ENCODE measurements at regions of chr7 and their contacts with region 1.

Region 1: DNA sequence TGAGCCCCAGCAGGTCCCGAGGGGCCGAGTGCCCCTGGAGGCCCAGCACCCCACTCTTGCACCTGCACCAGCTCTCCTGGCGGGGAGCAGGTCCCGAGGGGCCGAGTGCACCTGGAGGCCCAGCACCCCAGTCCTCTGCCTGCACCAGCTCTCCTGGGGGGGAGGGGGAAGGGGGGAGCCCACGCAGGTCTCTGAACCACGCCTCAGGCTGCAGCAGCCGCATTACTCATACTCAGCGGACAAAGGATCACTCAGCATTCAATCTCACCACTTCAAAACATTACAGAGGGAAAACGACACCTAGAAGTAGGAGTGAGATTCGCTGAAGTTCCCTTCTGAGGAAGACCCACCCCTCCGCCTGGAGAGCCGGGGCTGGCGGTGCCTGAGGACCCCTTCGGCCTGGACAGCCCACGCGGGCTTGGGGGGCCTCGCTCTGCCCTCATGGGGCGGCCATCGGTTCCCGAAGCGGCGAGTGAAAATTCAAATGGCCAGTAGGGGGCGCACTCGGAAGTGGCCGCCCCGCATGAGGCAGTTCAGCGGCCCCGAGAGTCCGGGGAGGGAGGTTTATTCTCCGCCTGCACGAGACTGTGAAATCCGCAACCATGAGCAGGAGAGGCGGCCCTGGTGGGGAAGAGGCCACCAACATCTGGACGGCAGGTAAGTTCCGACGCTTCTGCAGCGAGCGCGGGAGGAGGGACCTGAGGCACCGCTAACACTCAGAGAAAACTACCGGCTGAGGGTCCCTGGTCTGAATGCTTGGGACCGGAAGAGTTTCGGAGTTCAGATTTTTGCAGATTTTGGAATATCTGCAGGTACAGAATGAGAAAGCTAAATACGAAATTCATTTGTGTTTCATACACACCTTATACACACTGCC is 1.1 kb upstream of the GPER1 start:
- DNase-seq: peak; percentile 62 to 83 (median 79)
- H3K4me3 ChIP-seq: peak overlapping the region; percentile 40
- H3K27ac ChIP-seq: no peak overlapping the region
- H3K4me1 ChIP-seq: peaks cover 9% of the 10 kb centered on the region
- H3K27me3 ChIP-seq: no peaks in the 10 kb centered on the region
- CTCF ChIP-seq: peak; percentile 81 to 95 (median 82)
- EP300 ChIP-seq: no peak
- POLR2A ChIP-seq: no peak

Region 2: GRCh38 chr7:901381-902154 is 185.3 kb before region 1 on chr7:
- intact Hi-C with region 1: no loop called
- DNase-seq: peak; percentile 68 to 87 (median 84)
- H3K4me3 ChIP-seq: no peak overlapping the region
- H3K27ac ChIP-seq: peak overlapping the region in 1 of 2 donors; percentile 16
- H3K4me1 ChIP-seq: peaks cover 6% of the 10 kb centered on the region
- H3K27me3 ChIP-seq: no peaks in the 10 kb centered on the region
- CTCF ChIP-seq: no peak
- EP300 ChIP-seq: no peak
- POLR2A ChIP-seq: no peak

Region 3: GRCh38 chr7:1123715-1124114 is 36.9 kb after region 1 on chr7:
- intact Hi-C with region 1: loop called in 2 of 4 experiments (anchors 2 to 5 kb)
- DNase-seq: peak; percentile 79 to 88 (median 85)
- H3K4me3 ChIP-seq: no peak overlapping the region
- H3K27ac ChIP-seq: peak overlapping the region in 1 of 2 donors; percentile 55
- H3K4me1 ChIP-seq: peaks cover 18% of the 10 kb centered on the region
- H3K27me3 ChIP-seq: no peaks in the 10 kb centered on the region
- CTCF ChIP-seq: peak; percentile 46 to 66 (median 62)
- EP300 ChIP-seq: no peak
- POLR2A ChIP-seq: no peak

Region 4: DNA sequence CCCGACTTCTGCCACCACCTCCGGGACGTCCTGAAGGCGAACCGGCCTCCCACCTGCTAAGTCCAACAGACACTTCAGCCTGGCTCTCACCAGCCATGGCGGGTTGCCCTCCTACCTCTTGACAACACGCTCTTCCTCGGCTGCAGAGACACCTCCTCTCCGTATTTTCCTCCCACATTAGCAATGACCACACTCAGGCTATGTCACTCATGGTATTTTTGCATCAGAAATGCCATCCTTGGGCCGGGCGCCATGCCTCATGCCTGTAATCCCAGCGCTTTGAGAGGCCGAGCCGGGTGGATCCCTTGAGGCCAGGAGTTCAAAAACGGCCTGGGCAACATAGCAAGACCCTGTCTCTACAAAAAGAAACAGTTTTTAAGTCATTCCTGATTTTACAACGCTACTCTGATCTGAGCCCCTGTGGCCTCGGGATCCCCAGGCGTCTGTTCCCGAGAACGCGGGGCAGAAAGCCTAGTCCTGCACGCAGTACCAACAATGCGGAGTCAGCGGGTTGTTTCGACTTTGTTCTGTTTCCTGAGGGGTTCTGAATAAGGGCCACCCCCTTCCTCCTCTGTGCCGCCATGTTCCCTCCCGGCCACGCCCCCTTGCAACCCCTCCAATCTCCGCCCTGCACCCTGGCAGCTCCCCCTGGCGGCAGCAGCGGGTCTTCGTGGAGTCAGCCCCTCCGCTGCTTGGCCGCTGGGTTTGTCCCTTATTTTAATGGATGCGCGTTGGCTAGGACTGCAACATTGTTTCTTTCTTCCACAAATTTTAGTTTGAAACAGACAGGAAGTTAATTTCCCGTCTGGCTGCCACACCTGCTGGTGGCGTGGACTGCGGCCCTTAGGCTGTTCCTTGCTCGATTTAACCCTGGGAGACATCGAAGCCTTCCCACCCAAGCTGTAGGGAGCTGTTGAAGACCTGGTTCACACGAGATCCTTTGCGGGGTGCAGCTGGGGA is 82.9 kb after region 1 on chr7:
- intact Hi-C with region 1: loop called in 3 of 4 experiments (anchors 5 to 10 kb)
- DNase-seq: peak; percentile 57 to 85 (median 79)
- H3K4me3 ChIP-seq: peak overlapping the region; percentile 31
- H3K27ac ChIP-seq: no peak overlapping the region
- H3K4me1 ChIP-seq: no peaks in the 10 kb centered on the region
- H3K27me3 ChIP-seq: no peaks in the 10 kb centered on the region
- CTCF ChIP-seq: peak; percentile 31 to 73 (median 66)
- EP300 ChIP-seq: no peak
- POLR2A ChIP-seq: no peak

Region 5: GRCh38 chr7:1193593-1194424 is 107.0 kb after region 1 on chr7:
- intact Hi-C with region 1: no loop called
- DNase-seq: no peak
- H3K4me3 ChIP-seq: no peak overlapping the region
- H3K27ac ChIP-seq: no peak overlapping the region
- H3K4me1 ChIP-seq: no peaks in the 10 kb centered on the region
- H3K27me3 ChIP-seq: no peaks in the 10 kb centered on the region
- CTCF ChIP-seq: no peak
- EP300 ChIP-seq: no peak
- POLR2A ChIP-seq: no peak

Region 6: GRCh38 chr7:1532483-1533424 is 445.9 kb after region 1 on chr7:
- intact Hi-C with region 1: no loop called
- DNase-seq: peak; percentile 78 to 87 (median 80)
- H3K4me3 ChIP-seq: peak overlapping the region; percentile 51
- H3K27ac ChIP-seq: peak overlapping the region; percentile 83 to 99
- H3K4me1 ChIP-seq: peaks cover 26% of the 10 kb centered on the region
- H3K27me3 ChIP-seq: no peaks in the 10 kb centered on the region
- CTCF ChIP-seq: no peak
- EP300 ChIP-seq: peak; percentile 16
- POLR2A ChIP-seq: peak; percentile 55

Measured in ovary (tissue), 10 donors.